Sigmoid colon (tissue), 7 donors: ENCODE measurements at regions of chr16 and their contacts with region 1.

Region 1: GRCh38 chr16:2752035-2752849 is at the start of gene SRRM2:
- DNase-seq: peak; percentile 98
- H3K4me3 ChIP-seq: peak within 1 kb of the TSS; percentile 77 to 94 (median 84)
- H3K27ac ChIP-seq: peak within 1 kb of the TSS; percentile 98 to 99 (median 99)
- H3K4me1 ChIP-seq: peaks cover 0 to 45% (median 38%) of the 10 kb centered on the region in 4 donors
- H3K27me3 ChIP-seq: no peaks in the 10 kb centered on the region
- CTCF ChIP-seq: peak in 1 of 4 experiments; percentile 25
- EP300 ChIP-seq: peak in 2 of 4 donors; percentile 22 to 38
- POLR2A ChIP-seq: peak; percentile 61 to 88
- total RNA-seq, gene SRRM2: 181 to 826 (median 219) TPM

Region 2: GRCh38 chr16:2720719-2721633 is 31.3 kb before region 1 on chr16:
- intact Hi-C with region 1: loop called (anchors 2 kb)
- DNase-seq: peak; percentile 92
- H3K4me3 ChIP-seq: peak overlapping the region; percentile 53 to 64 (median 61)
- H3K27ac ChIP-seq: peak overlapping the region; percentile 66 to 79 (median 76)
- H3K4me1 ChIP-seq: peaks cover 0 to 16% (median 12%) of the 10 kb centered on the region in 4 donors
- H3K27me3 ChIP-seq: peaks cover 0 to 17% (median 0%) of the 10 kb centered on the region in 3 donors
- CTCF ChIP-seq: peak in 2 of 4 experiments; percentile 22 to 88
- EP300 ChIP-seq: no peak
- POLR2A ChIP-seq: no peak

Region 3: GRCh38 chr16:2926650-2927646 is 174.7 kb after region 1 on chr16:
- intact Hi-C with region 1: no loop called
- DNase-seq: peak; percentile 95
- H3K4me3 ChIP-seq: peak overlapping the region in 2 of 4 donors; percentile 17 to 19
- H3K27ac ChIP-seq: peak overlapping the region in 2 of 4 donors; percentile 29 to 44
- H3K4me1 ChIP-seq: peaks cover 0 to 10% (median 9%) of the 10 kb centered on the region in 4 donors
- H3K27me3 ChIP-seq: no peaks in the 10 kb centered on the region
- CTCF ChIP-seq: peak; percentile 84 to 96 (median 94)
- EP300 ChIP-seq: no peak
- POLR2A ChIP-seq: no peak